ENCODE measurements at regions of chr11 and their contacts with region 1.

Region 1: GRCh38 chr11:108871152-108871551 is 206.3 kb downstream of the DDX10 start:
- DNase-seq: peak; percentile 65
- ATAC-seq: peak; percentile 69
- H3K4me3 Mint-ChIP-seq: no peak overlapping the region
- H3K27ac Mint-ChIP-seq: no peak overlapping the region
- H3K4me1 Mint-ChIP-seq: peaks cover 42% of the 10 kb centered on the region
- H3K27me3 Mint-ChIP-seq: no peaks in the 10 kb centered on the region
- CTCF ChIP-seq: peak; percentile 40

Region 2: GRCh38 chr11:108697872-108698473 is 173.2 kb before region 1 on chr11:
- CTCF ChIA-PET with region 1: interaction called, 12 read pairs
- POLR2A ChIA-PET with region 1: no interaction called
- intact Hi-C with region 1: no loop called
- DNase-seq: peak; percentile 67
- ATAC-seq: peak; percentile 81
- H3K4me3 Mint-ChIP-seq: no peak overlapping the region
- H3K27ac Mint-ChIP-seq: no peak overlapping the region
- H3K4me1 Mint-ChIP-seq: peaks cover 7% of the 10 kb centered on the region
- H3K27me3 Mint-ChIP-seq: no peaks in the 10 kb centered on the region
- CTCF ChIP-seq: peak; percentile 75